ENCODE measurements at regions of chr19 and their contacts with region 1.

Region 1: DNA sequence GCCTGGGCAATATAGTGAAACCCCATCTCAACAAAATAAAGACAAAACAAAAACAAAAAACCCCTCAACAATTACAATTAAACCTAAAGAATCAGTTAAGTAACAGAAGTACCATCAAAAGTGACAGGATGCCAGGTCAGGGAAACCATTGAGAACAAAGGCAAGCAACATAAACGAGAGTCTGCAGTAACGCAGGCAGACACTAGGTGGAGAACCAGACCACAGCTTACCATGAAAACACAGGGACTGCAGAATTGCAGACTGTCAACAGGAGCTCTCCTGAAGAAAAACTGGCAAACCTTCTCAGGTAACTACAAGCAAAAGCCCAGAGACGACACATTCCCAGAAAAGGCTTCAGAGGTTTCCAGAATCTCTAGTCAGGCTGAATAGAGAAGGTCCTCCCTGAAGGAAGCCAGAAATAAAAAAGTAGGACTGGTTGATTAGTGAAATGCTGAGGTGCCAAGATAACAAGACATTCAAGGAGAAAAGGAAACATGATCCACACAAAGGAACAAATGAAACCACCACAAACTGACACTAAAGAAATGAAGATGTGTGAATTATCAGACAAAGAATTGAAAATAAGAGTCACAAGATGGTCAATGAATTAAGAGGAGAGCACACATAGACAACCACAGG is 2.2 kb upstream of the ZNF665 start:
- DNase-seq: peak; percentile 66
- H3K4me3 ChIP-seq: no peak overlapping the region
- H3K27ac ChIP-seq: no peak overlapping the region
- H3K4me1 ChIP-seq: peaks cover 0 to 5% of the 10 kb centered on the region in 2 experiments; a peak in 1 of 4 replicates
- H3K27me3 ChIP-seq: no peaks in the 10 kb centered on the region
- CTCF ChIP-seq: peak; percentile 77
- EP300 ChIP-seq: no peak
- RAD21 ChIP-seq: peak; percentile 94

Region 2: DNA sequence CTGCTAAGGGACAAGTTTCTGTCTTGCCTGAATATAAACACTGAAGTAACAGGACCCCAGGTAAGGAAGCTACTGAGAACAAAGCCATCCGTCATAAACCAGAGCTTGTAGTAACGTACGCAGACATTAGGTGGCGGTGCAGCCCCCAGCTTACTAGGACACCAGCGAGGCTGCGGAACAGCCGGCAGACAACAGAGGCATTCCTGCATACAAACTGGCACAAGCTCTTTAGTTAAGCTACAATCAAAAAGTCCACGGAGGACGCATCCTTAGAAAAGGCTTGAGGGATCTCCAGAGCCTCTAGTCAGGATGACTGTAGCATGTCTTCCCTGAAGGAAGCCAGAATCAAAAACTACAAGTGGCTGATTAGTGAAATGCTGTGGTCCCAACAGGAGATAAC is 118.4 kb before region 1 on chr19:
- CTCF ChIA-PET with region 1: no interaction called
- POLR2A ChIA-PET with region 1: no interaction called
- DNase-seq: peak; percentile 72
- H3K4me3 ChIP-seq: no peak overlapping the region; a peak in 1 of 4 replicates
- H3K27ac ChIP-seq: no peak overlapping the region
- H3K4me1 ChIP-seq: no peaks in the 10 kb centered on the region
- H3K27me3 ChIP-seq: no peaks in the 10 kb centered on the region
- CTCF ChIP-seq: peak; percentile 39
- EP300 ChIP-seq: no peak
- RAD21 ChIP-seq: peak; percentile 59

Region 3: DNA sequence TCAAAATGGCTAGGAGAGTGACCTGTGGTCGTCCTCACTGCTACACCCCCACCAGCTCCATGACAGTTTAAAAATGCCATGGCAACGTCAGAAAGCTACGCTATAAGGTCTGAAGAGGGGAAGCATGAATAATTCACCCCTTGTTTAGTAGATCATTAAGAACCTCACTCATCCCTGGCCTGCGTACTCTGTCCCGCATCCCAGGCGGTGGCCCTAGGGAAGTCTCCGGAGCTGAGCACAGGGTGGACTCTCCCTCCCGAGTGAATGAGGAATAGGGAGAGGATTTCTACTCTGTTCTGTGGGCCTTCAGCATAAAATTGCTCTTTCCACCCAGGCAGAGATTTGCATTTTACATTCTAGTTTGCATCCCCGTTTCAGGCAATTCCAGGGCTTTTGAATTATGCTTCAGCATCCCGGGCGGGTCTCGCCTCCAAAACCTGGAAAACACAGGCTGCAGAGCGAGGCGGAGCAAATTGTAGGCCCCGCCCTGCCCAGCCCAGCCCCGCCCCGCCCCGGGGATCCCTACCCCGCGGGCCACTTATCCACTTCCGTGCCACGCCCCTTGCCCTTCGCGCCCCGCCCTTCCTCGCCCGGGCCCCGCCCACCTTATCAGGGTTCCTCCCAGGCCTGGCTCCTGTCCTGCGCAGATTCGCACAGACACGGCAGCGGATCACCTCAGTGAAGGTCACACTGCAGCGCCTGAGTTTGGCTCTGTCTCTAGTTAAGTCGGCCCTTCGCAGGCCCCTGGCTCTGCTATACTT is 162.6 kb after region 1 on chr19:
- CTCF ChIA-PET with region 1: interaction called, 10 read pairs
- POLR2A ChIA-PET with region 1: no interaction called
- DNase-seq: peak; percentile 21
- H3K4me3 ChIP-seq: no peak overlapping the region
- H3K27ac ChIP-seq: no peak overlapping the region
- H3K4me1 ChIP-seq: no peaks in the 10 kb centered on the region
- H3K27me3 ChIP-seq: no peaks in the 10 kb centered on the region
- CTCF ChIP-seq: no peak
- EP300 ChIP-seq: no peak
- RAD21 ChIP-seq: no peak